ENCODE measurements at regions of chr19 and their contacts with region 1.

Region 1: GRCh38 chr19:54102421-54103169 is at the start of gene NDUFA3:
- DNase-seq: peak; percentile 95 to 99 (median 97)
- ATAC-seq: peak; percentile 99
- H3K4me3 ChIP-seq: peak within 1 kb of the TSS; percentile 72
- H3K4me3 Mint-ChIP-seq: peak within 1 kb of the TSS; percentile 87 to 99 (median 98)
- H3K27ac ChIP-seq: peak within 1 kb of the TSS; percentile 77
- H3K27ac Mint-ChIP-seq: peak within 1 kb of the TSS; percentile 85 to 98 (median 94)
- H3K4me1 ChIP-seq: peaks cover 0 to 6% of the 10 kb centered on the region in 2 donors
- H3K4me1 Mint-ChIP-seq: peaks cover 5 to 40% (median 24%) of the 10 kb centered on the region in 7 donors
- H3K27me3 ChIP-seq: no peaks in the 10 kb centered on the region
- H3K27me3 Mint-ChIP-seq: peaks cover 0 to 6% (median 0%) of the 10 kb centered on the region in 5 donors
- total RNA-seq, gene NDUFA3: 64.4 to 127 (median 117) TPM

Region 2: GRCh38 chr19:53977429-53977990 is 125.1 kb before region 1 on chr19:
- CTCF ChIA-PET with region 1: no interaction called
- POLR2A ChIA-PET with region 1: no interaction called
- intact Hi-C with region 1: loop called in 1 of 2 experiments (anchors 1 kb)
- DNase-seq: peak; percentile 34 to 69 (median 59)
- ATAC-seq: peak; percentile 83
- H3K4me3 ChIP-seq: peak overlapping the region; percentile 42
- H3K4me3 Mint-ChIP-seq: peak overlapping the region; percentile 73 to 90 (median 83)
- H3K27ac ChIP-seq: no peak overlapping the region
- H3K27ac Mint-ChIP-seq: peak overlapping the region in 2 of 9 donors; percentile 21 to 50
- H3K4me1 ChIP-seq: peaks cover 0 to 5% of the 10 kb centered on the region in 2 donors
- H3K4me1 Mint-ChIP-seq: peaks cover 14 to 41% (median 30%) of the 10 kb centered on the region in 7 donors
- H3K27me3 ChIP-seq: peaks cover 6 to 16% of the 10 kb centered on the region in 2 donors
- H3K27me3 Mint-ChIP-seq: peaks cover 48 to 70% (median 61%) of the 10 kb centered on the region in 5 donors

Region 3: GRCh38 chr19:54137086-54137921 is 34.7 kb after region 1 on chr19 and contains the start of gene CNOT3:
- CTCF ChIA-PET with region 1: interaction called, 6 read pairs
- POLR2A ChIA-PET with region 1: interaction called, 19 read pairs
- intact Hi-C with region 1: loop called (anchors 1 kb)
- DNase-seq: peak; percentile 90 to 100 (median 100)
- ATAC-seq: peak; percentile 88
- H3K4me3 ChIP-seq: peak within 1 kb of the TSS; percentile 66
- H3K4me3 Mint-ChIP-seq: peak within 1 kb of the TSS; percentile 87 to 98 (median 90)
- H3K27ac ChIP-seq: peak within 1 kb of the TSS; percentile 97
- H3K27ac Mint-ChIP-seq: peak within 1 kb of the TSS; percentile 85 to 94 (median 92)
- H3K4me1 ChIP-seq: peaks cover 19 to 30% of the 10 kb centered on the region in 2 donors
- H3K4me1 Mint-ChIP-seq: peaks cover 33 to 60% (median 46%) of the 10 kb centered on the region in 7 donors
- H3K27me3 ChIP-seq: no peaks in the 10 kb centered on the region
- H3K27me3 Mint-ChIP-seq: no peaks in the 10 kb centered on the region
- total RNA-seq, gene CNOT3: 38.0 to 84.6 (median 63.9) TPM

Region 4: DNA sequence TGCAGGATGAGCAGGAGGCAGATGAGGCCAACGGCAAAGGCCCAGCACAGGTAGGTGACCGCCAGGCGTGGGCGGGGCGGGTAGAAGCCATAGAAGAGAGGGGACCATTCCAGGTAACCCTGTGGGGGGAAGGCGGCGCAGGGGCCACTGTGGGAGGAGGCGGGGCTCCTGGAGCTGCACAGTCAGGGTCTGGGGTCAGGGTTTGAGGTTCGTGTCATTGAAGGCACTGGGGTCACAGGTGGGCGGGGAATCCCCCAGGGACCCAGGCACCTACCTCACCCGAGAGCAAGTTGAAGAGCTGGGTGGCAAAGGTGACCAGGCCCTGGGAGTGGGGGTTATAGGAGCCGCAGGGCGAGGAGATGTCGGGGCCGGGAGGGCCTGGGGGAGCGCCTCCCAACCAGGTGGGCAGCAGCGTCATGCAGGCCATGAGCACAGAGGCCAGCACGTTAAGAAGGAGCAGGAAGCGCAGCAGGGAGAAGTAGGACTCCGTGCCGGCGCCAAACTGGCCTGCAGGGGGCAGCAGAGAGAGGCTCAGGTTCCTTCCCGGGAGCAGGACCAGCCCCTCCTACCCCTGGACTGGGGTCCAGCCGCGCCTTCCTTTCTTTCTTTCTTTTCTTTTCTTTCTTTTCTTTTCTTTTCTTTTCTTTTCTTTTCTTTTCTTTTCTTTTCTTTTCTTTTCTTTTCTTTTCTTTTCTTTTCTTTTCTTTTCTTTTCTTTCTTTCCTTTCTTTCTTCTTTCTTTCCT is 65.8 kb after region 1 on chr19:
- CTCF ChIA-PET with region 1: no interaction called
- POLR2A ChIA-PET with region 1: no interaction called
- intact Hi-C with region 1: no loop called
- DNase-seq: peak; percentile 66 to 94 (median 82)
- ATAC-seq: peak; percentile 89
- H3K4me3 ChIP-seq: no peak overlapping the region
- H3K4me3 Mint-ChIP-seq: peak overlapping the region in 2 of 10 donors; percentile 8 to 28
- H3K27ac ChIP-seq: no peak overlapping the region
- H3K27ac Mint-ChIP-seq: no peak overlapping the region
- H3K4me1 ChIP-seq: peaks cover 4 to 12% of the 10 kb centered on the region in 2 donors
- H3K4me1 Mint-ChIP-seq: peaks cover 10 to 25% (median 17%) of the 10 kb centered on the region in 7 donors
- H3K27me3 ChIP-seq: no peaks in the 10 kb centered on the region
- H3K27me3 Mint-ChIP-seq: no peaks in the 10 kb centered on the region

Region 5: DNA sequence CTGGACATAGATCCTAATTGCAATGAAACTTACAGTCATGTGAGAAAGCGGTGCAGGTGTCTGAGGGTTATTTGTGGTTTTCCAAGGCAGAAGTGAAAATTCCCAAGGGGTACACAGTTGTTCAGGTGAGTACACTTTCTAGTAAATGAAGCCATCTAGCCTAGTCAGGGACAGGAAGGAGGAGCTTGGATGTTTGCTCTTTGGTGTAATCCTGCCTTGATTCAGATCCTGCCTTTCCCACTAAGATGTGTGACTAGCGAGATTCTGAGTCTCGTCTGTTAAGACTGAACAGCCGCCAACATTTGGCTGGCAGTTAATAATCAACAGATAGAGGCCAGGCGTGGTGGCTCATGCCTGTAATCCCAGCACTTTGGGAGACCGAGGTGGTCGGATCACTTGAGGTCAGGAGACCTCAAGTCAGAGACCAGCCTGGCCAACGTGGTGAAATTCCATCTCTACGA is 100.6 kb after region 1 on chr19:
- CTCF ChIA-PET with region 1: no interaction called
- POLR2A ChIA-PET with region 1: no interaction called
- intact Hi-C with region 1: loop called in 1 of 2 experiments (anchors 2 kb)
- DNase-seq: no peak
- ATAC-seq: no peak
- H3K4me3 ChIP-seq: no peak overlapping the region
- H3K4me3 Mint-ChIP-seq: peak overlapping the region in 9 of 10 donors; percentile 25 to 99 (median 98)
- H3K27ac ChIP-seq: peak overlapping the region; percentile 46
- H3K27ac Mint-ChIP-seq: peak overlapping the region in 3 of 9 donors; percentile 16 to 46 (median 38)
- H3K4me1 ChIP-seq: peaks cover 45 to 53% of the 10 kb centered on the region in 2 donors
- H3K4me1 Mint-ChIP-seq: peaks cover 30 to 86% (median 78%) of the 10 kb centered on the region in 7 donors
- H3K27me3 ChIP-seq: no peaks in the 10 kb centered on the region
- H3K27me3 Mint-ChIP-seq: peaks cover 0 to 4% (median 0%) of the 10 kb centered on the region in 5 donors

Region 6: GRCh38 chr19:54448774-54449700 is 346.4 kb after region 1 on chr19 and contains the start of gene LENG8:
- CTCF ChIA-PET with region 1: no interaction called
- POLR2A ChIA-PET with region 1: no interaction called
- intact Hi-C with region 1: loop called in 1 of 2 experiments (anchors 2 kb)
- DNase-seq: peak; percentile 95 to 99 (median 98)
- ATAC-seq: peak; percentile 94
- H3K4me3 ChIP-seq: peak within 1 kb of the TSS; percentile 85
- H3K4me3 Mint-ChIP-seq: peak within 1 kb of the TSS; percentile 93 to 99 (median 97)
- H3K27ac ChIP-seq: peak within 1 kb of the TSS; percentile 94
- H3K27ac Mint-ChIP-seq: peak within 1 kb of the TSS; percentile 97 to 100 (median 100)
- H3K4me1 ChIP-seq: peaks cover 19 to 39% of the 10 kb centered on the region in 2 donors
- H3K4me1 Mint-ChIP-seq: peaks cover 31 to 61% (median 54%) of the 10 kb centered on the region in 7 donors
- H3K27me3 ChIP-seq: no peaks in the 10 kb centered on the region
- H3K27me3 Mint-ChIP-seq: peaks cover 0 to 3% (median 0%) of the 10 kb centered on the region in 5 donors
- total RNA-seq, gene LENG8: 238 to 685 (median 503) TPM

Measured in naive thymus-derived CD4-positive, alpha-beta T cell (primary cell).